ENCODE measurements at regions of chr1 and their contacts with region 1.

Region 1: DNA sequence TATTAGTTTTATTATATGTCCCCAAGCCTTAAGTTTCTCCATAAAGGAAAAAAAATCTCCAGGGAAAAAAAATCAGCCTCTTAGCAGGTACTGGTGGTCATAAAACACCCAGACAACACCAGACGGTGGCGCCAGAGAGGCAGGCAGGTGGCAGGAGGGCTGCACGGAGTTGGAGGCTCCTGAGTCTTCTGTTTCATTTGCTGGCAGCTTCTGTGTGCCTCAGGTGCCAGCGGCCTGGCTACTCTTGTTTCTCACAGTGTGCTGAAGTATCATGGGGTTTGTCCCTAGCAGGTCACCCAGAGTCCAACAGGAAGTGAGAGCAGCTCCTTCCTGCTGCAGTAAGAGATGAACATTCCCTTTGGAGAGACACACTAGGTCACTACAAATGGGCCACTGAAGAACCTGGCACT is 123.3 kb upstream of the GADD45A start:
- DNase-seq: peak; percentile 81 to 89 (median 85)
- H3K4me3 ChIP-seq: no peak overlapping the region
- H3K27ac ChIP-seq: no peak overlapping the region
- H3K4me1 ChIP-seq: peaks cover 4% of the 10 kb centered on the region
- H3K27me3 ChIP-seq: no peaks in the 10 kb centered on the region
- CTCF ChIP-seq: peak; percentile 36 to 43 (median 43)
- EP300 ChIP-seq: no peak
- POLR2A ChIP-seq: no peak

Region 2: GRCh38 chr1:67418839-67419586 is 142.7 kb before region 1 on chr1:
- intact Hi-C with region 1: no loop called
- DNase-seq: no peak
- H3K4me3 ChIP-seq: no peak overlapping the region
- H3K27ac ChIP-seq: no peak overlapping the region
- H3K4me1 ChIP-seq: no peaks in the 10 kb centered on the region
- H3K27me3 ChIP-seq: no peaks in the 10 kb centered on the region
- CTCF ChIP-seq: no peak
- EP300 ChIP-seq: no peak
- POLR2A ChIP-seq: no peak

Region 3: GRCh38 chr1:67612788-67613241 is 51.1 kb after region 1 on chr1:
- intact Hi-C with region 1: no loop called
- DNase-seq: peak in 1 of 5 donors; percentile 54
- H3K4me3 ChIP-seq: no peak overlapping the region
- H3K27ac ChIP-seq: peak overlapping the region in 1 of 2 donors; percentile 33
- H3K4me1 ChIP-seq: peaks cover 19% of the 10 kb centered on the region
- H3K27me3 ChIP-seq: no peaks in the 10 kb centered on the region
- CTCF ChIP-seq: no peak
- EP300 ChIP-seq: no peak
- POLR2A ChIP-seq: no peak

Region 4: DNA sequence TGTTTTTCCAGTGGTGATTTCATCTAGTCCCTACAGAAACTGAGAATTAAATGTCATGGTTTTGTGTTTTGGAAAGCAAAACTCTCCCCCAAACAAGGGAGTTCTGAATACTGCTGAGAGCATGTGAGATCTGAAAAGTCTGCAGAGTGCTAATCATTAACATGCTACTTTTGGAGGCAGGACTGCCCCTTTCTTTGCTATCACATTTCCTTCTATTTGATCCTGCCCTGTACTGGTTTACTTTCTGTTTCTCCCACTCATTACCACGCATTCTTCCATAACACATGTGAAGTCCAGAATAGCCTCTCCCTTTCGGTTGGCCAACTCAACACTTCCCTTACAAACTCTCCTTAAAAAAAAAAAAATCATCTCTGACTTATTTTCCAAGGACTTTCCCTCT is 186.9 kb after region 1 on chr1:
- intact Hi-C with region 1: loop called in 1 of 4 experiments (anchors 10 kb)
- DNase-seq: no peak
- H3K4me3 ChIP-seq: peak overlapping the region; percentile 6
- H3K27ac ChIP-seq: peak overlapping the region; percentile 27 to 54
- H3K4me1 ChIP-seq: peaks cover 18% of the 10 kb centered on the region
- H3K27me3 ChIP-seq: no peaks in the 10 kb centered on the region
- CTCF ChIP-seq: no peak
- EP300 ChIP-seq: no peak
- POLR2A ChIP-seq: no peak

Measured in ovary (tissue), 10 donors.